ENCODE measurements at regions of chr7 and their contacts with region 1.

Region 1: DNA sequence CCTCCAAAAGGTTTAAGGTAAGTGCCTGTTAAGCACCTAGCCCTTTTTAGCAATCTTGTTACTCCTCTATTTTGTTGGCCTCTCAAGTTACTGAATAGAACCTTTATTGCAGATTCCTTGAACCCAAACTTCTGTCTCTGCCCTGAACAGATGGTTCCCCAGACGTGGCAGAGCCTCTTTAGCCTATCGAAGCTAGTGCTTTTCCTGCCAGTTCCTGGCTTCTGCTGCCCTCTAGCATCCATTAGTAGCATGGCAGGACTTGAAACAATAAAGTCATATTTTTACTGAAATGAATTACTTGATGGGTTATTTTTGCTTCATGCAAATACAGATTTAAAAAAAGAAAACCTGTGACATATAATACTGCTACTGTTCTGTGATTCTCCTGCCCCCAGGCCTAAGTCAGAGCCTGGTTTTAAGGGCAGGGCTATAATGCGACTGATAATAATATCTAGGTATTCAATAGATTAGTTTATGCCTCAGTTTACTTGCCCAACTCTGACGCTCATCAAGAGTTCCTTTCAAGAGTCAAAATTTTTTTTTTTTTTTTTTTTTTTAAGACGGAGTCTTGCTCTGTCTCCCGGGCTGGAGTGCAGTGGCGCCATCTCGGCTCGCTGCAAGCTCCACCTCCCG is 84.3 kb upstream of the PHF14 start:
- DNase-seq: no peak
- ATAC-seq: peak; percentile 96
- H3K4me3 ChIP-seq: no peak overlapping the region
- H3K27ac ChIP-seq: no peak overlapping the region
- H3K4me1 ChIP-seq: no peaks in the 10 kb centered on the region
- H3K27me3 ChIP-seq: no peaks in the 10 kb centered on the region
- CTCF ChIP-seq: peak; percentile 78 to 89 (median 86)
- EP300 ChIP-seq: no peak
- POLR2A ChIP-seq: no peak
- RAD21 ChIP-seq: peak; percentile 95

Region 2: GRCh38 chr7:10412422-10413019 is 476.9 kb before region 1 on chr7:
- CTCF ChIA-PET with region 1: interaction called, 9 read pairs
- POLR2A ChIA-PET with region 1: no interaction called
- RAD21 ChIA-PET with region 1: no interaction called
- SMC1A ChIA-PET with region 1: no interaction called
- in situ Hi-C with region 1: no loop called
- intact Hi-C with region 1: loop called (anchors 10 kb)
- DNase-seq: no peak
- ATAC-seq: peak; percentile 86
- H3K4me3 ChIP-seq: no peak overlapping the region
- H3K27ac ChIP-seq: no peak overlapping the region
- H3K4me1 ChIP-seq: no peaks in the 10 kb centered on the region
- H3K27me3 ChIP-seq: no peaks in the 10 kb centered on the region
- CTCF ChIP-seq: peak; percentile 35 to 63 (median 53)
- EP300 ChIP-seq: no peak
- POLR2A ChIP-seq: no peak
- RAD21 ChIP-seq: peak; percentile 68

Region 3: DNA sequence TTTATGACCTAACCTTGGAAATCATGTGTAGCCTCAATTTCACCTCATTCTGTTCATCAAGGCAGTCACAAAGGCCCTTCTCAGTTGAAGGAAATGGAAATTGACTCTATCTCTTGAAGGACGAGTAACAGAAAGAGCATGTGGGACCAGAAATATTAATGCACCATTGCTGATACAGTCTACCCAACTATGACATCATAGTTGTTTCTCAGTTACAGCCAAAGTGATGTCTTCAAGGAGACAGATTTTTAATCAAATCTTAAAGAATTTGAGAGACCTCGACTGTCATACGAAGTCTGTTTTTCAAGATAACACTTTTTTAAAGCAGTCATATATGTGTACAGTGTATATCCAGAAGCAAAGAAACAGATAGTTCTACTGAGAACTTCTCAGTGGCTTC is 251.4 kb before region 1 on chr7:
- CTCF ChIA-PET with region 1: interaction called, 8 read pairs
- POLR2A ChIA-PET with region 1: no interaction called
- RAD21 ChIA-PET with region 1: interaction called, 6 read pairs
- SMC1A ChIA-PET with region 1: interaction called, 3 read pairs
- in situ Hi-C with region 1: no loop called
- intact Hi-C with region 1: loop called (anchors 1 kb)
- DNase-seq: no peak
- ATAC-seq: no peak
- H3K4me3 ChIP-seq: no peak overlapping the region
- H3K27ac ChIP-seq: no peak overlapping the region
- H3K4me1 ChIP-seq: no peaks in the 10 kb centered on the region
- H3K27me3 ChIP-seq: no peaks in the 10 kb centered on the region; a peak in 1 of 4 replicates
- CTCF ChIP-seq: no peak
- EP300 ChIP-seq: no peak
- POLR2A ChIP-seq: no peak
- RAD21 ChIP-seq: no peak

Region 4: GRCh38 chr7:10998996-10999757 is 109.8 kb after region 1 on chr7:
- CTCF ChIA-PET with region 1: no interaction called
- POLR2A ChIA-PET with region 1: no interaction called
- RAD21 ChIA-PET with region 1: no interaction called
- SMC1A ChIA-PET with region 1: no interaction called
- in situ Hi-C with region 1: no loop called
- intact Hi-C with region 1: no loop called
- DNase-seq: no peak
- ATAC-seq: peak; percentile 69
- H3K4me3 ChIP-seq: no peak overlapping the region
- H3K27ac ChIP-seq: no peak overlapping the region
- H3K4me1 ChIP-seq: no peaks in the 10 kb centered on the region; the same call in 1 of the 2 replicates
- H3K27me3 ChIP-seq: no peaks in the 10 kb centered on the region
- CTCF ChIP-seq: no peak
- EP300 ChIP-seq: no peak
- POLR2A ChIP-seq: no peak
- RAD21 ChIP-seq: no peak

Region 5: DNA sequence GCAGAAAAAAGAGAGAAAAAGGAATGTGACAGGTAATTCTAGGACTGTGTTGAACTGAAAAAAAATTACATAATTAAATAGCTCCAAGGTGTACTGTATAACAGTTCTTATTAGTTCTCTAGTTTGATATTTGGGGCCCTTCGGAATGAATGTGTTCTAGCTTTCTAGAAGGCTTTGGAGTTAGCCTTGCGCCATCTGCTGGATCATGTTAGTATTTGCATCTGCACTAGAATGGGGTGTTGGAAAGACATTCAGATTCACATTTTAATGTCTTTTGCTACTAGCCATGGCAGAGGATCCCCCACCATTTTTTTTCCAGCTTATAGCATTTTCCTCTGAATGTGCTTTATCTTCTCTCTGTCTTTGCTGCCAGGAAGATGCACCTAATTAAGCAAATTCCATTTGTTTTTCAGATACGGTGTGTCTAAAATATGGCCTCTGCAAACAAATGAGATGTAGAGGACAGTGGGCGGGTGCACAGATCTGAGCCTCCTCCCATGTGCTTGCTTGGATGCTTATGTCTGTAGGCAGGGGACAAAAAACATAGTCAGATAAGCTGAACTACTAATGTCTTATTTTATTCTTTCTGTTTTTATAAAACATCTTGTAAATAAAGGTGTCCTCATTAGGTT is 322.8 kb after region 1 on chr7:
- CTCF ChIA-PET with region 1: interaction called, 8 read pairs
- POLR2A ChIA-PET with region 1: no interaction called
- RAD21 ChIA-PET with region 1: interaction called, 6 read pairs
- SMC1A ChIA-PET with region 1: no interaction called
- in situ Hi-C with region 1: no loop called
- intact Hi-C with region 1: loop called (anchors 5 kb)
- DNase-seq: peak; percentile 12
- ATAC-seq: peak; percentile 92
- H3K4me3 ChIP-seq: no peak overlapping the region
- H3K27ac ChIP-seq: no peak overlapping the region
- H3K4me1 ChIP-seq: no peaks in the 10 kb centered on the region
- H3K27me3 ChIP-seq: peaks cover 0 to 2% of the 10 kb centered on the region in 2 experiments; a peak in 3 of 4 replicates
- CTCF ChIP-seq: peak; percentile 74 to 81 (median 78)
- EP300 ChIP-seq: no peak
- POLR2A ChIP-seq: no peak
- RAD21 ChIP-seq: peak; percentile 92

Measured in GM12878 (cell line).